ENCODE measurements at regions of chr7 and their contacts with region 1.

Region 1: DNA sequence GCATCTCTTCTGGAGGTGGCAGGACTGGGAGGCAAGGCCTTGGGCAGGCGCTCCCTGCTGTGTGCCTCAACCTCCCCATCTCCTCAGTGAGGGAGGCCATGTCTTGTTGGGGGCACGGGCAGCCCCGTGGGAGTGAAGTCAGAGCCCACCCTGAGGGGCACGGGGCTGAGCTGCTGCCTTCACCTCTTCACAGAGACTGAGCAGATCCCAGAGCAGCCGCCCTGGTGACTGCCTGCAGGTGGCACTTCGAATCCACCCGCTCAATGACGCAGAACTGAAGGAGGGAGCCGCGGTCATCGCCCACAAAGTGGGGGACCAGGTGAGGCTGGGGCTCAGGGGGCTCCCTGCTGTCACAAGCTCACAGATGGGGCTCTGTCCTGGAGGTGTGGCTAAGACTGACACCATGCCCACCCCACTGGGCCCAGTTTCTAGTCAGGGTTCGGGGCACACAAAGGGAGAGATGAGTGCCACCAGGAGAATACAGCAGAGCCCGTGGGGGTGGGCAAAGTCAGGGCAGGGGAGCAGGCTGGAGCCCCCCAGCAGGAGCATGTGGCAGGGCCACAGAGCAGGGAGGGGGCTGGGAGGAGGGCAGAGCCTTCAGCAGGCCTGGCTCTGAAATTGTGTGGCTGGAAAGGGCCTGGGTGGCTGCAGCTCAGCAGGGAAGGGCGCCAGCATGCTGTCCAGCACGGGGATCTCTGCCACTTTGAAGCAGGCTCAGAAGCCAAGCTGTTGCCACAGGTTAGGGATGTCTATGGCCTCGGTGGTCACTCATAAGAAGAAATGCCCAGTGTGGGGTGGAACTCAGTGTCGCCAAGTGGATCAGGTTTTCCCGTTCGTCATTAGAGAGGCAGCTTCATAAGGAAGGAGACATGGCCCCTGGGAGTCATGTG is 18.8 kb upstream of the CHST12 start:
- DNase-seq: peak in 1 of 2 donors; percentile 39
- ATAC-seq: peak in 1 of 3 donors; percentile 51
- H3K4me3 ChIP-seq: no peak overlapping the region
- H3K4me3 Mint-ChIP-seq: no peak overlapping the region
- H3K27ac ChIP-seq: no peak overlapping the region
- H3K27ac Mint-ChIP-seq: no peak overlapping the region
- H3K4me1 ChIP-seq: no peaks in the 10 kb centered on the region
- H3K4me1 Mint-ChIP-seq: no peaks in the 10 kb centered on the region
- H3K27me3 ChIP-seq: no peaks in the 10 kb centered on the region
- H3K27me3 Mint-ChIP-seq: no peaks in the 10 kb centered on the region
- CTCF ChIP-seq: no peak

Region 2: DNA sequence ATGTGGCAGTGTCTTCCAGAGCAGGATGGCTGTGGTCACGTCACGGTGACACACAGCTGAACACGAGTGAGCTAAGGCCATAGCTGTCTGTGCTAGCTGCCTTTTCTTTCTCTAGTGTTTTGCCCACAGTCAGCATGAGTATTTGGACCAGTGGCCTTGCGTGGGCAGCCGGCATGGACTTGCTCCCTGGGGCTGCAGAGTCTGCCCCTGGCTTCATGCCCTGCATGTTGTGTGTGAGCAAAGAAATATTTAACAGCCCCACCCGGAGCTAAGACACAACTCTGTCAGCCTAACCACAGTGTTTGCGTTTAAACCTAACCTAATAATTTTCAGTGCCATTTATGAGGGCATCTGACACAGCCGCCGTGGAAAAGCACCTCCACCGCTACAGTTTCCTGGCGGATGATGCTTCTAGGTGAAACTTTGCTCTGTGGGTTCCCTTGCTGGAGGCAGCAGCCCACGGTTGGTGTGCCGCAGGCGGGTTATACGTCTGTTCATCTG is 33.4 kb after region 1 on chr7:
- intact Hi-C with region 1: no loop called
- DNase-seq: peak; percentile 80 to 86
- ATAC-seq: peak; percentile 69 to 89 (median 85)
- H3K4me3 ChIP-seq: no peak overlapping the region
- H3K4me3 Mint-ChIP-seq: peak overlapping the region; percentile 86
- H3K27ac ChIP-seq: peak overlapping the region; percentile 80
- H3K27ac Mint-ChIP-seq: peak overlapping the region; percentile 63 to 93
- H3K4me1 ChIP-seq: peaks cover 91% of the 10 kb centered on the region
- H3K4me1 Mint-ChIP-seq: peaks cover 60 to 63% of the 10 kb centered on the region in 2 donors
- H3K27me3 ChIP-seq: no peaks in the 10 kb centered on the region
- H3K27me3 Mint-ChIP-seq: no peaks in the 10 kb centered on the region
- CTCF ChIP-seq: no peak

Region 3: GRCh38 chr7:2431260-2431867 is 46.8 kb after region 1 on chr7:
- intact Hi-C with region 1: loop called (anchors 10 kb)
- DNase-seq: peak; percentile 44 to 69
- ATAC-seq: peak; percentile 71 to 90 (median 77)
- H3K4me3 ChIP-seq: no peak overlapping the region
- H3K4me3 Mint-ChIP-seq: no peak overlapping the region
- H3K27ac ChIP-seq: no peak overlapping the region
- H3K27ac Mint-ChIP-seq: peak overlapping the region; percentile 47 to 51
- H3K4me1 ChIP-seq: peaks cover 24% of the 10 kb centered on the region
- H3K4me1 Mint-ChIP-seq: peaks cover 65 to 68% of the 10 kb centered on the region in 2 donors
- H3K27me3 ChIP-seq: no peaks in the 10 kb centered on the region
- H3K27me3 Mint-ChIP-seq: no peaks in the 10 kb centered on the region
- CTCF ChIP-seq: peak; percentile 62

Region 4: GRCh38 chr7:2680792-2681490 is 296.3 kb after region 1 on chr7:
- intact Hi-C with region 1: no loop called
- DNase-seq: peak; percentile 53 to 71
- ATAC-seq: peak; percentile 56 to 70 (median 67)
- H3K4me3 ChIP-seq: no peak overlapping the region
- H3K4me3 Mint-ChIP-seq: no peak overlapping the region
- H3K27ac ChIP-seq: no peak overlapping the region
- H3K27ac Mint-ChIP-seq: no peak overlapping the region
- H3K4me1 ChIP-seq: no peaks in the 10 kb centered on the region
- H3K4me1 Mint-ChIP-seq: peaks cover 0 to 4% of the 10 kb centered on the region in 2 donors
- H3K27me3 ChIP-seq: no peaks in the 10 kb centered on the region
- H3K27me3 Mint-ChIP-seq: peaks cover 11 to 15% of the 10 kb centered on the region in 2 donors
- CTCF ChIP-seq: peak; percentile 62

Measured in natural killer cell (primary cell).